AG04450 (cell line): ENCODE measurements at regions of chr4 and their contacts with region 1.

Region 1: GRCh38 chr4:133154725-133155124 is 5.6 kb downstream of the PCDH10 start:
- DNase-seq: no peak
- H3K4me3 ChIP-seq: no peak overlapping the region
- H3K27ac ChIP-seq: no peak overlapping the region
- H3K27me3 ChIP-seq: peaks cover 41% of the 10 kb centered on the region
- CTCF ChIP-seq: peak; percentile 77

Region 2: DNA sequence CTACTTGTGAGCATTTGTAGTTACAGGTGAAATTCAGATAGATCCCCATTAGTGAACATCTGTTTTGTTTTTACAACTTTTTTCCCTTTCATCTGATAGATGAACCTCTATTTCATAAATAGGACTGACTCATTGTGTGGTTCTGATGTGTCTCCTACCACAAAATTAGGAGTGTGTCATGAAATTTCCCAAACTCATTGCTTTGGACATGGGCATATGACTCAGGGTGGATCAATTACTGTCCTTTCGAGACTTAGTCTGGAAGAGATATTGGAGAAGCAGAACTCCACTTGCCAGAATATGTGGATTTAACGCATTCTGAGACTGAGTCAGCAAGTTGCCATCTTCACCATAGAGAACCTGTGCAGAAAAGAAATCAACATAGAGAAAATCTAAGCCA is 59.1 kb before region 1 on chr4:
- CTCF ChIA-PET with region 1: no interaction called
- POLR2A ChIA-PET with region 1: no interaction called
- DNase-seq: no peak
- H3K4me3 ChIP-seq: no peak overlapping the region
- H3K27ac ChIP-seq: no peak overlapping the region
- H3K27me3 ChIP-seq: no peaks in the 10 kb centered on the region
- CTCF ChIP-seq: no peak

Region 3: GRCh38 chr4:133178956-133179355 is 24.2 kb after region 1 on chr4:
- CTCF ChIA-PET with region 1: interaction called, 11 read pairs
- POLR2A ChIA-PET with region 1: no interaction called
- DNase-seq: no peak
- H3K4me3 ChIP-seq: no peak overlapping the region
- H3K27ac ChIP-seq: no peak overlapping the region
- H3K27me3 ChIP-seq: no peaks in the 10 kb centered on the region
- CTCF ChIP-seq: no peak

Region 4: DNA sequence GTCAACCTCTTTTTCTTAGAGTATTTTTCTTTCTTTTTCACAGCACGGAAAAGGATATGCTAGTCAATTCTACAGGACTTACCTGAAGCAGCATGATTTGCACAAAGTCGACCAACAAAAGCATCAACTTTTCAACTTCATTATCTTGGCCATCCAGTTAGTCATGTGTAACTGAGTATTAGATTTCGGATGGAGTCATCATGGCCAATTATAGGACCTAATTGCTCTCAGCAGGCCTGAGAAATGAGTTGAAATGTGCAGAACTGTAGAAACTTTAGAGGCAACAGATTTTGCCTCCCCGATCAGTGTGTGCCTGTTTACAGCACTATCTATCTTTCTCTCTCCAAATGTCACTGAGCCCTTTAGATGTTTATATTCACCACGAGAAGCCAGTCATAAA is 35.4 kb after region 1 on chr4:
- CTCF ChIA-PET with region 1: interaction called, 10 read pairs
- POLR2A ChIA-PET with region 1: no interaction called
- DNase-seq: no peak
- H3K4me3 ChIP-seq: no peak overlapping the region
- H3K27ac ChIP-seq: no peak overlapping the region
- H3K27me3 ChIP-seq: no peaks in the 10 kb centered on the region
- CTCF ChIP-seq: no peak

Region 5: DNA sequence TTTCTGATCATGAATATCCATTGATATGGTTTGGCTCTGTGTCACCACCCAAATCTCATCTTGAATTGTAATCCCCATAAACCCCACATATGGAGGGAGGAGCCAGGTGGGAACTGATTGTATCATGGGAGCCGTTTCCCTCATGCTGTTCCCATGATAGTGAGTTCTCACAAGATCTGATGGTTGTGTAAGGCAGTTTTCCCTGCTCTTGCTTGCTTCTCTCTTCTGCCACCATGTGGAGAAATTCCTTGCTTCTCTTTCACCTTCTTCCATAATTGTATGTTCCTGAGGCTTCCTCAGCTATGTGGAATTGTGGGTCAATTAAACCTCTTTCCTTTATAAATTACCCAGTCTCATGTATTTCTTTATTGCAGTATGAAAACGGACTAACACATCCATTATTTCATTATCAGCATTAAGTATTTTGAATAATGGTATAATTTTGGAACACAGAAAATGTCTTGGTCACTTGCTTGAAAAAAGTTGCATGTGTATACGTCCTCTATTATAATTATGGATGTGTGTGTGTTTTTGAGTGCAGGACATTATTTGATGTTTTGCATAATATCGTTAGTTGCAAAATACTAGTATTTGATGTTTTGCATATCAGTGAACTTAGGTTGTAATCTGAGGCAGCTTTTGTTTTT is 329.0 kb after region 1 on chr4:
- CTCF ChIA-PET with region 1: interaction called, 31 read pairs
- POLR2A ChIA-PET with region 1: no interaction called
- DNase-seq: peak; percentile 15
- H3K4me3 ChIP-seq: no peak overlapping the region
- H3K27ac ChIP-seq: no peak overlapping the region
- H3K27me3 ChIP-seq: no peaks in the 10 kb centered on the region
- CTCF ChIP-seq: peak; percentile 59

Region 6: GRCh38 chr4:133839326-133839725 is 684.6 kb after region 1 on chr4:
- CTCF ChIA-PET with region 1: interaction called, 23 read pairs
- POLR2A ChIA-PET with region 1: no interaction called
- DNase-seq: no peak
- H3K4me3 ChIP-seq: no peak overlapping the region
- H3K27ac ChIP-seq: no peak overlapping the region
- H3K27me3 ChIP-seq: no peaks in the 10 kb centered on the region
- CTCF ChIP-seq: peak; percentile 31; the same call in 1 of the 2 replicates